Aorta (tissue), 5 donors: ENCODE measurements at regions of chr5 and their contacts with region 1.

Region 1: DNA sequence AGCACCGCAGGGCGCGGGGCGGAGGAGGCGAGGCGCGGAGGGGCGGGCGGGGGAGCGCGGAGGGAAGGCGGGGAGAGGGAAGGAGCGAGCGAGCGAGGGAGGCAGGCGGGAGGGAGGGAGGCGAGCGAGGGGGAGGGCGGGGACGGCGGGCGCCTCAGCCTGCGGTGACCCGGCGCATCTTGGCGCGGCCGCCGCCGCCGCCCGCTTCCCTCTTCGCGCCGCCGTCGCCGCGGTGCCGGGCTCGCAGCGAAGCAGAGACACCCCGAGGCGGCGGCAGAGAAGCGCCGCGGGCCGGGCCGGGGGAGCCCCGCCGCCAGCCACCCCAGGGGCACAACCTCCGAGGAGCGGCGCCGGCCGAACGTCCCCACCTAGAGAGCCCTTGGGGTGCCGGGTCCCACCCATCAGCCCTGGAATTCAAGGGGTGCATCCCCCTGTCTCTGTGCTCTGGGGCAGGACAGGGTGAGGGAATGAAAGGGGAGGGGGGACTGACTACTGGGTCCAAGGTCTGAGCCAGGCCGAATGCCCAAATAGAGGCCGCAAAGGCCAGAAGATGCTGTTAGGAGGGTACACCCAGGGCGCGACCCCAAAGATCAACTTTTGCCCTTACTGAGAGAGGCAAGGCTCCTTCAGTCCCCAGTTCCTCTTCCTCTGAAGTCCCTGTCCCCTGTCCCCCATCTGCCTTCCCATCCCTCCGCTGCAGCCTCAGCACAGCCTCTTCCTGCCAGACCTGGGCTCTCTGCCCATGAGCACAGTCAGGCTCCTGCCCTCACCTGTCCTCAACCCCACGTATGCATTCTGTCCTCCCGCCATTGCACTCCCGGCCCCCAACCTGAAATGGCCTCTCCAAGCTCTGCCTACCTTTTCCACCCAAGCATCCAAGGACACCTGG is at the start of gene ADAMTS2:
- DNase-seq: peak; percentile 84 to 92
- ATAC-seq: peak; percentile 70
- H3K4me3 ChIP-seq: peak within 1 kb of the TSS; percentile 65 to 76
- H3K27ac ChIP-seq: no peak within 1 kb of the TSS
- H3K4me1 ChIP-seq: no peaks in the 10 kb centered on the region
- H3K27me3 ChIP-seq: no peaks in the 10 kb centered on the region
- total RNA-seq, gene ADAMTS2: 24.5 to 49.8 TPM

Region 2: GRCh38 chr5:179265514-179266290 is 80.0 kb before region 1 on chr5:
- intact Hi-C with region 1: loop called (anchors 5 kb)
- DNase-seq: peak; percentile 97 to 98
- ATAC-seq: peak; percentile 93
- H3K4me3 ChIP-seq: no peak overlapping the region
- H3K27ac ChIP-seq: peak overlapping the region in 1 of 2 donors; percentile 75
- H3K4me1 ChIP-seq: no peaks in the 10 kb centered on the region
- H3K27me3 ChIP-seq: no peaks in the 10 kb centered on the region

Region 3: DNA sequence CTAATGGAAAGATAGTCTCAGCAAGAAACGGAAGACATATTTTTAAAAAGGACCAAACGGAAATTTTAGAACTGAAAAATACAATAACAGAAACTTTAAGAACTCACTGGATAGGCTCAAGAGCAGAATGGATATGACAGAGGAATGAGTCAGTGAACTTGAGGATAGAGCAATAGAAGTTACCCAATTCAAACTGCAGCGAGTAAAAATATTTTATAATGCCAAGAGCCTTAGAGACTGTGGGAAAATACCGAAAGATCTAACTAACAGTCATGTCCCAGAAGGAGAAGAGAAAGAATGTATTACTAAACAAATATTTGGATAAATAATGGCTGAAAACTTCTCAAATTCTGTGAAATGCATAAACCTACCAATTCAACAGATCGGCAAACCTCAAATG is 41.2 kb before region 1 on chr5:
- intact Hi-C with region 1: no loop called
- DNase-seq: no peak
- ATAC-seq: peak; percentile 64
- H3K4me3 ChIP-seq: no peak overlapping the region
- H3K27ac ChIP-seq: no peak overlapping the region
- H3K4me1 ChIP-seq: no peaks in the 10 kb centered on the region
- H3K27me3 ChIP-seq: no peaks in the 10 kb centered on the region

Region 4: DNA sequence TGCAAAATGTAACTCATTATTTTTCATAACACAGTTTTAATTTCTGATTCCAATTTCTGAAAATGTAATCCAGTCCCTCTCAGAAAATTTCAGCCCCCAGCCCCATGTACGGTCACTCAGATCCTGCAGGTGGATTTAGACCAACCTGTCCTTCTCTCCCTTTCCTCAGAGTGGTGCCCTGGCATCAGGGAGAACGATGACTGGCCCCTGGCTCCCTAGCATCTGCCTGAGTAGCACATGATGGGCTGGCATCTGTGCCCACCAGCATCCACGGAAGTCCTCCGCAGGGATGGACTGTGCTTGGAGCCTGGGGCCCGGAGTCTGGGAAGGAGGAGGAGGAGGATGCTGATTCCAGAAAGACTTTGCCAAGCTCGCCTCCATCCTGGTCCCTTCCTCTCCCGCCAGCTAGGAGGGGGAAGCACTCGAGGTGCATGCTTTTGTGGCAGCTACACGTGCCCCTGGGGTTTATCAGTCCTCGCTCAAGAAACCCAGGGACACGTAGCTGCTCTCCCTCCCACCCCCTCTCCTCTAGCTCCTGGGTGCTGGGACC is 150.3 kb after region 1 on chr5:
- intact Hi-C with region 1: loop called in 1 of 2 experiments (anchors 10 kb)
- DNase-seq: peak in 1 of 2 donors; percentile 28
- ATAC-seq: no peak
- H3K4me3 ChIP-seq: no peak overlapping the region
- H3K27ac ChIP-seq: no peak overlapping the region
- H3K4me1 ChIP-seq: no peaks in the 10 kb centered on the region
- H3K27me3 ChIP-seq: no peaks in the 10 kb centered on the region